GM12878 (cell line): ENCODE measurements at regions of chr6 and their contacts with region 1.

Region 1: DNA sequence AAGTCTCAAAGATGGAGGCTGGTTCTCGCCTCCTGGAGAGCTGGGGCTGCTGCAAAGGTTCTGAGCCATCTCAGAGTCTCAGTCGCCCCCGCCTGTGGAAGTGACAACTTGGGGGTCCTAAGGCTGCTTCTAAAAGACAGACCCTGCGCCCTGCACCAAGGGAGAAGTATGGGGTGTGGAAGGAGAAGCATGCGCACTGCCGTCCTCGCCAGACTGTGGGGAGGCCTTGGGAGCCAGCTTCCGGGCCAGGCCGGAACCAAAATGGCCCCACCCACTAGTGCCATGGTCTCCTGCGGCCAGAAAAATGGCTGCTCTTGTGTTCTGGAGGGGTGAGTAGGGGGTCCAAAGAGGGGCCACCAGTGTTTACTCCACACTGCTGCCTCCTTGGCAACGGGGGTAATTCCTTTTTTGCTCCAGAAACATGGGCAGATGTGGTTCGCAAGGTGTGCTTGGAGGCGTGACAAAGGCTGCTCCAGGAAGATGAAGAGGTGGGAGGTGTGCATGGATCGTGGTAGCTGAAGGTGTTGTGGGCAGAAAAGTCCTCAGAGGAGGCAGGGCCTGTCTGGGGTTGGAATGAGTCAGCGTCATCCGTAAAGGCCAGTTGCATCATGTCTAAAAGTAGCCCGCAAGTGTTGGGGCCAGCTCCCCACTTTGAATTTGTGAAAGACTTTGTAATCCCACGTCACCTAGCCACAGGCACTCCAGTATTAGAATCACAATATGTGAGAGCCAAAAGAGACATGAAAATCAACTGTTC is 329.8 kb upstream of the SOX4 start:
- DNase-seq: peak; percentile 63
- ATAC-seq: peak; percentile 94
- H3K4me3 ChIP-seq: no peak overlapping the region
- H3K27ac ChIP-seq: peak overlapping the region; percentile 69
- H3K4me1 ChIP-seq: peaks cover 17% of the 10 kb centered on the region
- H3K27me3 ChIP-seq: no peaks in the 10 kb centered on the region
- CTCF ChIP-seq: no peak
- EP300 ChIP-seq: peak; percentile 64 to 92; a peak in 3 of 4 replicates
- POLR2A ChIP-seq: no peak
- RAD21 ChIP-seq: 0 out of 2 replicates have a peak, but pooled peaks have one; percentile 7

Region 2: DNA sequence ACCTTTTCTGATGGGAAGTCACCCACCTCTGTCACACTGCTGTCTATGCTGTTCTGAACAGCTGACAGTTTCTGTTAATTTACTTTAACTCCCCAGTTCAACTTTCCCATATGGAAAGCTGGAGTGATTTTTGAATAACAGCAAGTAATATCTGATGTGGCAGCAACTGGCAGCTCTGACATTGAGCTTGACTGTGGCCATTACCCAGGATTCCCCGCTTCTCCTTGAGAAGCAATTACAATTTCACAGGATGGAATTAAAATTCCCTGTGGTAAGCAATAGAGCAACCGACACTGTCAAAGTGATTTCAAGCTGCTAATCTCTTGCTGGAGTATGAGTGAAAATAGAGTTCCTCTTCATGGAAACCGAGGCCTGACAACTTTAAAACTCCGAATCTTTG is 18.2 kb before region 1 on chr6:
- CTCF ChIA-PET with region 1: no interaction called
- POLR2A ChIA-PET with region 1: interaction called, 7 read pairs
- RAD21 ChIA-PET with region 1: interaction called, 4 read pairs
- SMC1A ChIA-PET with region 1: interaction called, 10 read pairs
- in situ Hi-C with region 1: no loop called
- intact Hi-C with region 1: no loop called
- DNase-seq: no peak
- ATAC-seq: no peak
- H3K4me3 ChIP-seq: no peak overlapping the region
- H3K27ac ChIP-seq: no peak overlapping the region
- H3K4me1 ChIP-seq: no peaks in the 10 kb centered on the region
- H3K27me3 ChIP-seq: no peaks in the 10 kb centered on the region
- CTCF ChIP-seq: no peak
- EP300 ChIP-seq: no peak
- POLR2A ChIP-seq: no peak
- RAD21 ChIP-seq: no peak

Region 3: DNA sequence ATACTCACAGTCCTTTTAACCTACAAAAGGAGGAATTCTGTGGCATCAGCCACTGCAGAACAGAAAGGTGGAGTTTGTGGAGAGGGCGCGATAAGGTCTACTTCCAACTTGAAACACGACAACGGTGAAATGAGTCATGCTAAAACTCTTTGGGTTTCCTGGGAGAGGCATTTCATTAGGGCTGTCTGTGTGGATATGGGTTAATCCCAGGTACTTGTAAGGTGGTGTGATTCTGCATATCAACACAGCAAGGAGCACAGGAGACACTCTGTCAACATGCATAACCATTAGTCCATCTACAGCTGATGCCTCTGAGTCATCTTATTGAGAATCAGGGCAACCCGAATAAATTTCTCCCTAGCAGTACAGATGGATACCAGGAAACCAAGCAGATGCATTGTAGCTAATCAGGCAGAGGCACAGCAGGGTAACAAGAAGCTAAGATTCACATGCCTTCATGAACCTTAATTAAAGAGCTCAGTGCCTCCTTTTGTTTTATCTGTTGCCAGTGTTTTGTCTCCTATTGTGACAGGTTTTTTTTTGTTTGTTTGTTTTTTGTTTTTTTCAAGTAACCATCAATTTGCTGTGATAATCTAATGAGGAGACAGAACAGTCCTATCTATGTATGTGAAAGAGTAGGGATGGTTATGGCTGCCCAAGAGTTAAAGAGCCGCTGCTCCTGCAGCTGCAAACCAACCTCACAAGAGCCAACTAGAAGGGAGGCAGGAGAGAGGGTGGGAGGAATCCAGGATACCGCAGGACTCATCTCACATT is 14.1 kb after region 1 on chr6:
- CTCF ChIA-PET with region 1: no interaction called
- POLR2A ChIA-PET with region 1: interaction called, 10 read pairs
- RAD21 ChIA-PET with region 1: no interaction called
- SMC1A ChIA-PET with region 1: interaction called, 12 read pairs
- in situ Hi-C with region 1: no loop called
- intact Hi-C with region 1: no loop called
- DNase-seq: no peak
- ATAC-seq: no peak
- H3K4me3 ChIP-seq: no peak overlapping the region
- H3K27ac ChIP-seq: no peak overlapping the region
- H3K4me1 ChIP-seq: no peaks in the 10 kb centered on the region
- H3K27me3 ChIP-seq: no peaks in the 10 kb centered on the region
- CTCF ChIP-seq: no peak
- EP300 ChIP-seq: no peak
- POLR2A ChIP-seq: no peak
- RAD21 ChIP-seq: no peak

Region 4: DNA sequence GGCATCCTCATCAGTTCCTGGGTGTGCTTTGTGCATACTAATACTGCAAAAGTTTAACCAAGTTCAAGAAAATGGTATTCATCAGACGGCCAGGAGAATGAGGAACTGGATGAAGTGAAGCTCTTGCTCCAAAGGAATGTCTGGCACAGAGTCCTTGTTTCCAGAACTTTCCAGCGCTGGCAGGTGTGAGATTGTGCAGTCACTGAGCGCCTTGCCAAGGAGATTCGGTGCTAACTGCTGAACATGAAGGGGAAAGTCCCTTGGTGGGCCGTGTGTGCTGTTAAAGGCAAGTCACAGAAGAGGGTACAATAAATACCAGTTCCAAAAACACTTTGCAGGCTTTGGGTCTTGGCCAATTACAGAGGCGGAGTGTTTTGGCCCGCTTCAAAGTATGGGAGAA is 67.5 kb after region 1 on chr6:
- CTCF ChIA-PET with region 1: no interaction called
- POLR2A ChIA-PET with region 1: no interaction called
- RAD21 ChIA-PET with region 1: no interaction called
- SMC1A ChIA-PET with region 1: no interaction called
- in situ Hi-C with region 1: no loop called
- intact Hi-C with region 1: no loop called
- DNase-seq: no peak
- ATAC-seq: peak; percentile 54
- H3K4me3 ChIP-seq: no peak overlapping the region
- H3K27ac ChIP-seq: no peak overlapping the region
- H3K4me1 ChIP-seq: no peaks in the 10 kb centered on the region
- H3K27me3 ChIP-seq: no peaks in the 10 kb centered on the region
- CTCF ChIP-seq: no peak
- EP300 ChIP-seq: no peak
- POLR2A ChIP-seq: no peak
- RAD21 ChIP-seq: no peak